ENCODE measurements at regions of chr14 and their contacts with region 1.

Region 1: DNA sequence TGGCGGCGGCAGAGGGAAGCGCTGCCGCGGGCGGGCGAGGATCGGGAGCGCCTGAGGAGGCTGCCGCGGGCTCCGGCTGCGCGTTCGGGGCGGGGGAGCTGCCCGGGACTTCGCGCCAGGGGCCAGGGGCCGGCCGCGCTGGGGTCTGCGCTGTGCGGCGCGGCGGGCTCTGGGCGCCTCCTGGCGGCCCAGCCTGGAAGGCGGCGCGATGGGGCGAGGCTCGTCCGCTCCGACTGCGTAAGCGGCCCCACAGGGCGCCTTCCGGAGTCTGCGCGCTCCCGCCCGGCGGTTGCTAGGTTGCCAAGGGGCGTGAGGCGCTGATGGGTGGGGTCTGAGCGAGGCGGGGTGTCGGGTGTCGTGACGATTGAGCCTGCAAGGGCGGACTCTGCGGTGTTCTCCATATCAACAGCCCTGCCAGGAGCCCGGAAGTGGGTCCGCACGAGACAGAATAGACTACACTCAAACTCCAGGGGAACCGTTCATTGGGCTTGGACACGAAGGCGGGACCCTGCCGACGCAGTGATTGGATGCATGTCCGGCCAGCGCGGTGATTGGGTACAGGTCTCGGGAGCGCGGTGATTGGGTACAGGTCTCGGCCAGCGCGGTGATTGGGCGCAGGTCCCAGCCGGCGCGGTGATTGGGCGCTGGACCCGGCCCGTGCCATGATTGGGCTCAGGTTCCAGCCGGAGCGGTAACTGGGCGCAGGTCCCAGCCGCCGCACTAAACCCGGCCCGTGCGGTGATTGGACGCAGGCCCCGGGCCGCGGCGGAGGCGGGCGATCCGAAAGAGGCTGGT is at the start of gene TEDC1:
- DNase-seq: peak; percentile 100
- ATAC-seq: peak; percentile 88 to 95
- H3K4me3 ChIP-seq: peak within 1 kb of the TSS; percentile 67 to 91 (median 76)
- H3K27ac ChIP-seq: peak within 1 kb of the TSS; percentile 81 to 93 (median 86)
- H3K4me1 ChIP-seq: peaks cover 23 to 35% of the 10 kb centered on the region in 2 donors
- H3K27me3 ChIP-seq: peaks cover 0 to 3% (median 1%) of the 10 kb centered on the region in 3 donors
- CTCF ChIP-seq: peak; percentile 67 to 98 (median 96)
- POLR2A ChIP-seq: peak; percentile 68 to 74
- total RNA-seq, gene TEDC1: 0.97 to 4.2 (median 2.2) TPM

Region 2: DNA sequence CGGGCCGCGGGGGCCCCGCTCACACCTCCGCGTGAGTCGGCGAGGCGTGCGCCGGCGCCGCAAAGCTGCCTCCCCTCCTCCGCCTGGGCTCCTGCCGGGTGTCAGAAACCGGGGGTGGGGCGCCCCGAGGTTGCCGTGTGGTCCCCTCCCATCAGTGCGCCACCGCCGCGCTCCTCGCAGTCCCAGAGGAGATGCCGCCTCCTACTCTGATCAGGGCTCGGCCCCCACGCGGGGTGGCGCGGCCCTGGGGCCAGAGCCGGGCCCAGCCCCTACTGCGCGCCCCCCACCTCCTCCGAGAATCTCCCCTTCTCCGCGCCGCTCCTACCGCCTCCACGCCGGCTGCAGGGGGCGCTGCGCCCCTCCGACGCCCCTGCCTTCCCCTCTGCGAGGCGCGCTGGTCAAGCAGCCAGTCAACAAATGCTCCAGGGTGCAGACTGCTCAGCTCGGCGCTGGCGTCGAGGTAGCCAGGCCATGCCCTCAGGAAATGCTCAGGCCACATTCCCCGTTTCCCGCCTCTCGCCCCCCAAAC is 321.7 kb before region 1 on chr14:
- in situ Hi-C with region 1: no loop called
- intact Hi-C with region 1: loop called (anchors 10 kb)
- DNase-seq: no peak
- ATAC-seq: peak; percentile 5 to 13
- H3K4me3 ChIP-seq: peak overlapping the region; percentile 38 to 57 (median 44)
- H3K27ac ChIP-seq: peak overlapping the region; percentile 76 to 83 (median 80)
- H3K4me1 ChIP-seq: peaks cover 49 to 58% of the 10 kb centered on the region in 2 donors
- H3K27me3 ChIP-seq: no peaks in the 10 kb centered on the region
- CTCF ChIP-seq: peak in 4 of 5 experiments; percentile 44 to 60 (median 56)
- POLR2A ChIP-seq: peak in 1 of 2 donors; percentile 19

Region 3: GRCh38 chr14:105351920-105352851 is 138.6 kb before region 1 on chr14:
- in situ Hi-C with region 1: loop called in 1 of 4 experiments (anchors 25 kb)
- intact Hi-C with region 1: no loop called
- DNase-seq: peak; percentile 74 to 86
- ATAC-seq: peak; percentile 100
- H3K4me3 ChIP-seq: no peak overlapping the region
- H3K27ac ChIP-seq: peak overlapping the region in 2 of 4 donors; percentile 12 to 48
- H3K4me1 ChIP-seq: peaks cover 6 to 9% of the 10 kb centered on the region in 2 donors
- H3K27me3 ChIP-seq: no peaks in the 10 kb centered on the region
- CTCF ChIP-seq: peak; percentile 83 to 91 (median 90)
- POLR2A ChIP-seq: no peak

Region 4: DNA sequence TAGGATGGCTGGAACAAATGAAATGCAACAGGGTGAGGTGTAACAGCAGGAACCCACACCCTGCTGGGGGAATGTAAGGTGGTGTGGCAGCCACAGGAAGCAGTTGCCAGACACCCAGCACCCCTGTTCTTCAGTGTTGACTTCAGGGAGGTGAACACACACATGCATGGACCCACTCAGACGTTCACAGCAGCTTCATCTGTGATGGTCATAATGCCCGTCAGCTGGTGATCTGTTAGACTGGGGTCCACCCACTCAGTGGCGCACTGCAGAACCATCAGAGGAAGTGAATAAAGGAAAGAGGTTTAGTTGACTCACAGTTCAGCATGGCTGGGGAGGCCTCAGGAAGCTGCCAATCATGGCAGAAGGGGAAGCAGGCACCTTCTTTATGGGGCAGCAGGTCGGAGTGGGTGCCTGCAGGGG is 115.1 kb before region 1 on chr14:
- in situ Hi-C with region 1: loop called in 1 of 4 experiments (anchors 25 kb)
- intact Hi-C with region 1: loop called (anchors 1 kb)
- DNase-seq: no peak
- ATAC-seq: no peak
- H3K4me3 ChIP-seq: no peak overlapping the region
- H3K27ac ChIP-seq: no peak overlapping the region
- H3K4me1 ChIP-seq: no peaks in the 10 kb centered on the region
- H3K27me3 ChIP-seq: no peaks in the 10 kb centered on the region
- CTCF ChIP-seq: no peak
- POLR2A ChIP-seq: no peak

Region 5: GRCh38 chr14:105414456-105415371 is 76.1 kb before region 1 on chr14:
- in situ Hi-C with region 1: no loop called
- intact Hi-C with region 1: loop called (anchors 2 kb)
- DNase-seq: peak; percentile 52 to 82
- ATAC-seq: peak; percentile 80
- H3K4me3 ChIP-seq: peak overlapping the region; percentile 36 to 71 (median 58)
- H3K27ac ChIP-seq: peak overlapping the region; percentile 64 to 93 (median 82)
- H3K4me1 ChIP-seq: peaks cover 22 to 30% of the 10 kb centered on the region in 2 donors
- H3K27me3 ChIP-seq: peaks cover 0 to 4% (median 0%) of the 10 kb centered on the region in 3 donors
- CTCF ChIP-seq: peak; percentile 61 to 92 (median 90)
- POLR2A ChIP-seq: no peak

Region 6: GRCh38 chr14:105448706-105449111 is 42.1 kb before region 1 on chr14:
- in situ Hi-C with region 1: no loop called
- intact Hi-C with region 1: loop called (anchors 1 kb)
- DNase-seq: peak; percentile 41 to 58
- ATAC-seq: peak; percentile 89 to 90
- H3K4me3 ChIP-seq: no peak overlapping the region
- H3K27ac ChIP-seq: no peak overlapping the region
- H3K4me1 ChIP-seq: peaks cover 2 to 9% of the 10 kb centered on the region in 2 donors
- H3K27me3 ChIP-seq: no peaks in the 10 kb centered on the region
- CTCF ChIP-seq: peak; percentile 69 to 94 (median 90)
- POLR2A ChIP-seq: no peak

Region 7: GRCh38 chr14:105473677-105474482 is 16.9 kb before region 1 on chr14:
- in situ Hi-C with region 1: no loop called
- intact Hi-C with region 1: loop called (anchors 2 kb)
- DNase-seq: peak in 1 of 2 donors; percentile 58
- ATAC-seq: peak; percentile 47 to 55
- H3K4me3 ChIP-seq: peak overlapping the region; percentile 51 to 84 (median 62)
- H3K27ac ChIP-seq: peak overlapping the region; percentile 4 to 69 (median 58)
- H3K4me1 ChIP-seq: peaks cover 41 to 57% of the 10 kb centered on the region in 2 donors
- H3K27me3 ChIP-seq: peaks cover 0 to 4% (median 0%) of the 10 kb centered on the region in 3 donors
- CTCF ChIP-seq: no peak
- POLR2A ChIP-seq: no peak

Region 8: DNA sequence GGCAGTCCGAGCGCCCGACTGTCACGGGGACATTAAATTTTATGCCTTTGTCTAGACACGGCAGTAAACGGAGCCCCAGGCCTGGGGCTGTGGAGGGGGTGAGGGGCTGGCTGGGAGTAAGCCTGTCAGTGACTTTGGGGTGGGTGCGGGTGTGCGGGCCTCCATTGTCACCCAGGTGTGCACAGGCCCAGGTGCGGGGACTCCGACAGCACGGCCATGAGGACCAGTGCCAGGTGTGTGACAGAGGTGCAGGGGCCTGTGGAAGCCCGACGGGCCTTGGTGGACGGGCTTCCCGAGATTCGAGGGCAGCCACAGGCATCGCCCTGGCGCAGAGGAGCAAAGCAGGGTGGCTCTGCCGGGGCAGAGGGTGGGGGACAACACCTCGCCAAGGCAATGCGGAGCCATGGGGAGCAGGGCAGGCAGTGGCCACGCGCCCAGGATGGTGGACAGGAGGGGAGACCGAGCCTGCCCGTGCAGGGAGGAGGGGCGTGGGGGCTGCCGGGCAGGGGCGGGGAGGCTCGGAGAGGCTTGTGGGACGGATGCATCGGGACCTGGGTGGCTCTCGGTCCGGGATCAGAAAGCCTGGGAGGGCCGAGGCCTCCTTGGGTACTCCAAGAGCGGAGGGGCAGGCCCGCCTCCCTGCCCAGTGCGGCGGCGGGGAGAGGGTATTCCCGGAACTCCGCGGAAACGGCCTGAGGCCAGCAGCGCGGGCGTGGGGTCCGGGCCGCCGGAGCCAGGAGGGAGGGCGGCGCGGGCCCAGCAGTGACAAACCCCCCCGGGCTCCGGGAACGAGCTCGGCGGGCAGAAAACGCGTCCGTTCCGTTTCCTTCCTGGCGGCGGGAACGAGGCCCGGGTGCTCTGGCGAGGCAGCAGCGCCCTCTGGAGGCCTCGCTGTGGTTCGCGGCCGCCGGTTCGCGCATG is 37.2 kb after region 1 on chr14:
- in situ Hi-C with region 1: no loop called
- intact Hi-C with region 1: no loop called
- DNase-seq: peak; percentile 26 to 49
- ATAC-seq: peak; percentile 74 to 88
- H3K4me3 ChIP-seq: peak overlapping the region; percentile 61 to 86 (median 68)
- H3K27ac ChIP-seq: peak overlapping the region in 1 of 4 donors; percentile 12
- H3K4me1 ChIP-seq: peaks cover 11 to 24% of the 10 kb centered on the region in 2 donors
- H3K27me3 ChIP-seq: peaks cover 24 to 37% (median 32%) of the 10 kb centered on the region in 3 donors
- CTCF ChIP-seq: peak; percentile 62 to 92 (median 80)
- POLR2A ChIP-seq: no peak

Region 9: DNA sequence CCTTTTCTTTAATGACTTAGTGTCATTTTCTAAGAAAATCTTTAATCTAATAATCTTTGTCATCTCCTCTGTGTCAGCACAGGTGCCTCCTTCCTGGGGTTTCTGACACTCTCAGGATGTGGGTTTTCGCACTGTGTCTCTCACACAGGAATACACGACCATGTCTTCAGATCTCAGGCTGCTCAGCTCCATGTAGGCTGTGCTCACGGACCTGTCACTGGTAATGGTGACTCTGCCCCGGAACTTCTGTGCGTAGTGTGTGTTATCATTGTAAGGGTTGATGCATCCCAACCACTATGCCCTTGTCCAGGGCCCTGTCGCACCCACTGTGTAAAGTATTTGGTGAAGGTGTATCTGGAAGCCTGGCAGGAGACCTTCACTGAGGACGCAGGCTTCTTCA is 683.4 kb after region 1 on chr14:
- in situ Hi-C with region 1: no loop called
- intact Hi-C with region 1: no loop called
- DNase-seq: no peak
- ATAC-seq: no peak
- H3K4me3 ChIP-seq: no peak overlapping the region
- H3K27ac ChIP-seq: no peak overlapping the region
- H3K4me1 ChIP-seq: no peaks in the 10 kb centered on the region
- H3K27me3 ChIP-seq: no peaks in the 10 kb centered on the region
- CTCF ChIP-seq: no peak
- POLR2A ChIP-seq: no peak